Heart right ventricle (tissue), 16 donors: ENCODE measurements at regions of chr12 and their contacts with region 1.

Region 1: DNA sequence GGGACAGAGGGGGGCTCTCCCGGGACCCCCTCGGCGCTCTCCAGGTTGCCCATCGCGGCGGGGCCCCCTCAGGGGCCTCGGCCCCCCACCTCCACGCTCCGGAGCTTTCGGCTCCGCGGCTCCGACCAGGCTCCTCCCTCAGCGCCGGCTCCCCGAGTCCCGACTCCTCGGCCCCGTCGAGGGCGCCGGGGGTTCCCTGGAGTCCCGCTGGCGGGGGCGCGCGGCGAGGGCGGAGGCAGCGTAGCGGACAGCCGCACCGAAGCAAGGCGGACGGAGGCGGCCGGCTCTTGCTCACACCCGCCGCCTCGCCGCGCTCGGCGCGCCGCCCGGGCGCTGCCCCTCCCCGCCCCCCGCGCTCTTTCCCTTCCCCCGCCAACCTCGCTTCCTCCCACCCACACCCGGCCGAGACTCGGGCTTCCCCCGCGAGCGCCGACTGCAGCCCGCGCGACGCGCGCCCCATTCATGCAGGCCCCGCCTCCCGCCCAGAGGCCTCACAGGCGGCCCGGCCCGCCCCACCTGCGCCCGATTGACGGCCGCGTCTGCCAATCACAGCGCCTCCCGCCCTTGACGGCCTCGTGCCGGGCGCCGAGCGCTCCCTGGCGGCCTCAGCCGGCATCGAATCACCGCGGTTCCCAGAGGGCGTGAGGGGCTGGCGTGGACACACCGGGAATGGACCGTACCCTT is at the start of gene FMNL3:
- DNase-seq: peak; percentile 97 to 99
- ATAC-seq: peak; percentile 96 to 99 (median 97)
- H3K4me3 ChIP-seq: peak within 1 kb of the TSS; percentile 67 to 98 (median 94)
- H3K27ac ChIP-seq: peak within 1 kb of the TSS; percentile 88 to 99 (median 98)
- H3K4me1 ChIP-seq: peaks cover 9 to 46% (median 36%) of the 10 kb centered on the region in 9 donors
- H3K27me3 ChIP-seq: peaks cover 0 to 7% (median 0%) of the 10 kb centered on the region in 7 donors
- CTCF ChIP-seq: peak in 8 of 9 donors; percentile 94 to 98 (median 96)
- total RNA-seq, gene FMNL3: 10.1 to 19.6 (median 12.0) TPM

Region 2: GRCh38 chr12:49636979-49637755 is 70.1 kb before region 1 on chr12:
- intact Hi-C with region 1: loop called in 3 of 10 experiments (anchors 2 to 5 kb)
- DNase-seq: peak in 1 of 2 donors; percentile 66
- ATAC-seq: peak; percentile 66 to 81 (median 76)
- H3K4me3 ChIP-seq: no peak overlapping the region
- H3K27ac ChIP-seq: peak overlapping the region in 5 of 10 donors; percentile 11 to 51 (median 32)
- H3K4me1 ChIP-seq: peaks cover 5 to 22% (median 14%) of the 10 kb centered on the region in 9 donors
- H3K27me3 ChIP-seq: no peaks in the 10 kb centered on the region
- CTCF ChIP-seq: peak; percentile 47 to 76 (median 66)

Region 3: GRCh38 chr12:49644620-49644994 is 62.7 kb before region 1 on chr12:
- intact Hi-C with region 1: loop called (anchors 1 to 5 kb)
- DNase-seq: peak; percentile 80 to 88
- ATAC-seq: peak; percentile 71 to 87 (median 82)
- H3K4me3 ChIP-seq: no peak overlapping the region
- H3K27ac ChIP-seq: peak overlapping the region in 6 of 10 donors; percentile 35 to 90 (median 46)
- H3K4me1 ChIP-seq: peaks cover 16 to 59% (median 50%) of the 10 kb centered on the region in 9 donors
- H3K27me3 ChIP-seq: no peaks in the 10 kb centered on the region
- CTCF ChIP-seq: peak in 8 of 9 donors; percentile 92 to 98 (median 96)

Region 4: DNA sequence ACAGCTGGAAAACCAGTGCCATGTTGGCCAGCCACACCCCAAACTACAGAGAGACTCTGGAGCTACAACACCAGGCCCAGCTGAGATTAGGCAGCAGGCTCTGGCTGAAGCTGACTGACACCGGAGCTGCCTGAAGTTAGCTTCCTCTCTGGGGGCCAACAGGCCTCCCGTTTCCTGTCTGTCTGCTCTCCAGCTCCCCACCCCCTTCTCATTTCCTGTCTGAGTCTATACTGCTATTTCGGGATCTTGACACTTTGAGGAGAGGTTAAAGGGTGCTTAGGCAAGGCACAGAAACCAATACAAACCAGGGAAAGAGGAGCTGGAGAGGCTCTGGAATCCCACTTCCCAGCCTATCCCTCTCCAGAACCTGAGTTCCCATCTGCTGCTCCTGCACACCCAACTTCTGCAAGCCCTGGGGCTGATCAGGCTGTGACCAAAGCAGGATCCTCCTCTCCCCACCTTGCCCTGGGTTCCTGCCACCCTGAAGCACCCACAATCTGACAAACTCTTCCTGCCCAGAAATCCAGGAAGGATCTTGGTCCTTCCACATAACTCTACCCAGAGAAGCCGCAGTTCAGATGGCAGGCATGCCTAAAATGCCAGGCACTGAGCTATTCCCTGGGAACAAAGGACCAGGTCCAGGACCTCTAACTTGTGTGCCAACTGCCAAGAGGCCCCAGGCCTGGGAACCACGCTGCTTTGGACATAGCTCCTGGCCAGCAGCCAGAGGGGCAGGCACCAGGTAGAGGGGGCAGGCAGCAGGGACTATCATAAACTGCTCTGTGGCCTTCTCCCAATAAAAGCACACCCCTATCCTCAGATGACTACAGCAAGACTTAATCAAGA is 44.0 kb before region 1 on chr12:
- intact Hi-C with region 1: loop called in 1 of 10 experiments (anchors 5 kb)
- DNase-seq: peak; percentile 71 to 91
- ATAC-seq: peak; percentile 77 to 93 (median 90)
- H3K4me3 ChIP-seq: peak overlapping the region in 2 of 10 donors; percentile 6 to 7
- H3K27ac ChIP-seq: peak overlapping the region; percentile 74 to 97 (median 86)
- H3K4me1 ChIP-seq: peaks cover 34 to 100% (median 86%) of the 10 kb centered on the region in 9 donors
- H3K27me3 ChIP-seq: no peaks in the 10 kb centered on the region
- CTCF ChIP-seq: no peak

Region 5: DNA sequence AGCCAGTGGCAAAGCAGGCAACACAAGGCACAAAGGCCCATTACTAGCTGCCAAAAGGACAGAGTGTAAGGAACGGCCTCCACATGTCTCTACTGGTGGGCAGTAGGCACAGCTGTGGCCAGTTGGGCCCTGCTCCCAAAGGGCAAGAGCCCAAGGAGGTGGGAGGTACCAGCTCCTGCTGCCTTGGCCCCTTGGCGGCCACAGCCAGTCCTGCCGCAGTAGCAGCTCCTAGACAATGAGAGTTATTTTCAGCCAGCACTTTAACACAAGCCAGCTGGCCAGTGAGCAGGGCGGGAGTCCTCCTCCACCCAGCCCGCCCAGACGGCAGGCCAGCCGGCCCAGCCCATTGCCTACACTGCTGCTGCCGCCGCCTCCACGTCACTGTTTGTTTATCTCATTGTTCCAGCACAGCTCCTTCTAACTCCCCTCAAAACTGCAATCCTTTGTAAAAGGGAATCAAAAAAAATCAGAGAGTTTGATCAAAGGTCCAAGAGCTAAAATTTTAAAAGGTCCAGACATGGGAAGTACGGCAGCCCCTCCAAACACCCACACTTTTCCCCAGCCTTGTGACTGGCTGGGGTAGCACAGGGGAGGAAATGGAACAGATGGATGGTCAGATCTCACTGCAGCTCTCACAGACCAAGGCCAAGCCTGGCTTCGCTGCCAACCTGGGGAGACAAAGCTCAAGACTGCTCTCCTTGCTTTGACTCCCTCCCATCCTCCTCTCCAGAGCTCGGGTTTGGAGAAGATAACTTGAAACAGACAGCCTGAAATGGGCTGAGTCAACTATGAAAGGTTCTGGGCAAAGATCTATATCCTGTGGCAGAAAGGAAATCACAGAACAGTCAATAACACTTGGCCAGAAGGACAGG is 33.6 kb before region 1 on chr12:
- intact Hi-C with region 1: loop called in 7 of 10 experiments (anchors 1 to 5 kb)
- DNase-seq: peak; percentile 91 to 95
- ATAC-seq: peak; percentile 95 to 99 (median 96)
- H3K4me3 ChIP-seq: peak overlapping the region in 5 of 10 donors; percentile 8 to 33 (median 12)
- H3K27ac ChIP-seq: peak overlapping the region; percentile 81 to 97 (median 94)
- H3K4me1 ChIP-seq: peaks cover 40 to 90% (median 73%) of the 10 kb centered on the region in 9 donors
- H3K27me3 ChIP-seq: no peaks in the 10 kb centered on the region
- CTCF ChIP-seq: peak; percentile 20 to 63 (median 44)

Region 6: GRCh38 chr12:49842519-49843352 is 135.5 kb after region 1 on chr12 and contains the start of gene BCDIN3D:
- intact Hi-C with region 1: no loop called
- DNase-seq: peak; percentile 90 to 92
- ATAC-seq: peak; percentile 97 to 99 (median 98)
- H3K4me3 ChIP-seq: peak within 1 kb of the TSS; percentile 60 to 86 (median 72)
- H3K27ac ChIP-seq: peak within 1 kb of the TSS; percentile 62 to 95 (median 90)
- H3K4me1 ChIP-seq: peaks cover 3 to 24% (median 16%) of the 10 kb centered on the region in 9 donors
- H3K27me3 ChIP-seq: peaks cover 0 to 14% (median 0%) of the 10 kb centered on the region in 7 donors
- CTCF ChIP-seq: no peak
- total RNA-seq, gene BCDIN3D: 1.1 to 3.9 (median 2.4) TPM